Posterior vena cava (tissue), 2 donors: ENCODE measurements at regions of chr11 and their contacts with region 1.

Region 1: GRCh38 chr11:61129639-61130523 is 27.6 kb downstream of the CD5 start:
- DNase-seq: peak; percentile 95

Region 2: DNA sequence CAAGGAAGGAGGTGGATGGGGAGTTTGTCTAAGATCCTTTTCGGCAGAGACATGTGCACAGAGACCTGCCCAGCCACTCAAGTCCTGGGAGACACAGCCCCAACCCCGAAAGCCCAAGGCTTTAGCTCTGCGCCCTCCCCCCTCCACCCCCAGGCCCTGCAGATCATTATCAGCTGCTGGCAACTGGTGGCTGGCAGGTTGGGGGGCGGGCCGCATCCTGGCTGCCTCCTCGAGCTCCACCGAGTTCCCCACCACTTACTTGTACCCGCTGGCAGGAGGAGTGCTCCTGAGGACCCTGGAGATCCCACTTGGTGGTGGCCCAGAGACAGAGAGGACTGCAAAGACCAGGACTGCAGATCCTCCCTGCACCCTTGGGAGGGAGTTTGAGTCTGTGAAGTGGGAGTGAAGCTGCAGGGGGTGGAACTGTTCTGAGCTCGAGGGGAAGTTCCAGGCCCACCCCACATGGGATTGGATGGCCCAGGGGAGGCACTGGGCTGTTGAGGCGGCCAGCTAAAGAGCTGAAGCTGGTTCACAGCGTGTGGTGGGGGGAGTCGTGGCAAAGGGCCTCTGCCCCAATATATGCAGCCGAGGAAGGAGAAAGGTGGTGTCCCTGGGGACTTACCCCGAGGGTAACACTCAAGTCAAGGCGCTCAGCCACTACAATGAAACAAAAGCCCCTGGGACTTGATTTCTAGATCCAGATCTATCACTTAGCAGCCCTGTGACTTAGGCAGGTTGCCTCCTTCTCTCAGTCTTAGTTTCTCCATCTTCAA is 307.9 kb before region 1 on chr11:
- intact Hi-C with region 1: loop called in 1 of 2 experiments (anchors 10 kb)
- DNase-seq: no peak

Region 3: DNA sequence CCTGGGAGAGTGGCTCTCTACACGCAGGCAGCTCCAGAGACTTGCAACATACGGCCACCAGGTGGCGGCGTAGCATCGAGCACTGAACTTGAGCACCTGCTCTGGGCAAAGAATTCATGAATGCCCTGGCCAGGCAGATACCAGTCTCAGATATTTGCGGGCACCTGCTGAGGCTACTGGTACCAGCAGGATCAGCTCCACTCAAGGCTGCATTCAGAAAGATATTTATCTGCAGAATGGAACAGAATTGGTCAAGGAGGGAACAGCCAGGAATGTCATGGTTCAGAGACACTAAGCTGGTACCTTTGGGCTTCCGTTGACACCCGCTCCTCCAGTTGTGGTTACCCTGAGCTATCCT is 298.8 kb before region 1 on chr11:
- intact Hi-C with region 1: loop called (anchors 5 to 10 kb)
- DNase-seq: peak; percentile 94

Region 4: DNA sequence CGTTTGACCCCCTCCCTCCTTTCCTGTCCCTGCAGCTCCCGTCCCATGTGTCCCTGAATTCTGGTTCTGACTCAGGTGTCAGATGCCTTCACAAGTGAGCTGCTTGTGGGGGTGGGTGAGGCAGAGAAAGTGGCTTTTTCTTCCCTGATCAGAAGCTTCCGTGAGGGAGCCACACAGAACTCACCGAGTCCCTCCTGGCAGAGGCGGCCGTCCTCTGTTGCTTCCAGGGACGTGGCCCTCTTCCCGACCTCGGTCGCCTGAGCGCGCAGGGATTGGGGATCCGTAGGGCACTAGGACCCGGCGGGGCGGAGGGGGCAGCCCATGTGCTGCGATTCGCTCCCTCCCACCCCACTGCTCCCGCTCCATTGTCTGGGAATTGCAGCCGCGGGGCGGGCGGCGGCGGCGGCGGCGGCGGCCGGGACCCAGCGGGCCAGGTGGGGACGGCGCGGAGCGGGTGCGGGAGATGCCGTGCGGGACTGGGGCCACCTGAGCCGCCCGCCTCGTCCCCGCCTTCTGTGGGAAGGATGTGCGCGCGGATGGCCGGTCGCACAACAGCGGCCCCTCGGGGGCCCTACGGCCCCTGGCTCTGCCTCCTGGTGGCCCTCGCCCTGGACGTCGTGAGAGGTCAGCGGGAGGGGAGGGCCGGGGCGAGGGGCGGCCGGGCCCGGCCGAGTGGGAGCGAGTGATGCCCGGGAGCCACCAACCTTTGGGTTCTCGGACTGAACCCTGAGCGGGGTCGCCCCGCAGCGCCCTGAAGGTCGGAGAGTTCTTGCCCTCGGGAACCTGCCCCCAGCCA is 205.6 kb before region 1 on chr11 and contains the start of gene TMEM132A:
- intact Hi-C with region 1: loop called in 1 of 2 experiments (anchors 10 kb)
- DNase-seq: peak; percentile 88
- total RNA-seq, gene TMEM132A: 5.4 to 7.7 TPM

Region 5: DNA sequence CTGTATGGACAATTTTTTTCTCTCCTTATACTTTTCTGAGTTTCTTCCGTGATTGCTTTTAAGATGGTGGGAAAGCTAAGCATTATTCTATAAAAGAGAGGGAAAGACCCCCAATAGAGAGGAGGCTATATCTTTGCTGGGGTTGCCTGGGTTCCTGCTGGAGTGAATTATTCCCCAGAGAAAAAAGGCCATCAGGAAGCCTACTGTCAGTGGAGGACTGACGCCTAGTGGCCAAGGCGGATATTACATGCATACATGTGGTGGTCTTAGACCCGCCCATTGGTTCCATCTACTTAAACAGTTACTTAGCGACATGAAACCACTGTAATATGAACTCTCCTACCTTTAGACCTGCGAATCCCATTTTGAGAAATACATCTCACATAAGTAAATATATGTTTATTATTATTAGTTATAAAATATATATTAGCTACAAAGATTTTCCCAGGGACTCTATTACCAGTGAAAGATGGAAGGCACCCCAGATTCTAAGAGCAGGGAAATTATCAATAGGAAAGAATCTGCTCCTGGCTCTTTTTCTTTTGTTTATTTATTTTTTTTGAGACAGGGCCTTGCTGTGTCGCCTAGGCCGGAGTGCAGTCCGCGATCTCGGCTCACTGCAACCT is 57.7 kb after region 1 on chr11:
- intact Hi-C with region 1: loop called in 1 of 2 experiments (anchors 5 kb)
- DNase-seq: peak; percentile 85